HCT116 (cell line): ENCODE measurements at regions of chr22 and their contacts with region 1.

Region 1: GRCh38 chr22:41091132-41092022 is 1.0 kb upstream of the EP300 start:
- DNase-seq: peak; percentile 95
- ATAC-seq: peak; percentile 92
- H3K4me3 ChIP-seq: peak overlapping the region; percentile 71 to 72
- H3K27ac ChIP-seq: peak overlapping the region; percentile 100
- H3K4me1 ChIP-seq: peaks cover 13 to 26% of the 10 kb centered on the region in 2 experiments; a peak in 3 of 4 replicates
- H3K27me3 ChIP-seq: no peaks in the 10 kb centered on the region
- CTCF ChIP-seq: no peak
- POLR2A ChIP-seq: no peak
- RAD21 ChIP-seq: peak; percentile 34; the same call in 1 of the 2 replicates

Region 2: DNA sequence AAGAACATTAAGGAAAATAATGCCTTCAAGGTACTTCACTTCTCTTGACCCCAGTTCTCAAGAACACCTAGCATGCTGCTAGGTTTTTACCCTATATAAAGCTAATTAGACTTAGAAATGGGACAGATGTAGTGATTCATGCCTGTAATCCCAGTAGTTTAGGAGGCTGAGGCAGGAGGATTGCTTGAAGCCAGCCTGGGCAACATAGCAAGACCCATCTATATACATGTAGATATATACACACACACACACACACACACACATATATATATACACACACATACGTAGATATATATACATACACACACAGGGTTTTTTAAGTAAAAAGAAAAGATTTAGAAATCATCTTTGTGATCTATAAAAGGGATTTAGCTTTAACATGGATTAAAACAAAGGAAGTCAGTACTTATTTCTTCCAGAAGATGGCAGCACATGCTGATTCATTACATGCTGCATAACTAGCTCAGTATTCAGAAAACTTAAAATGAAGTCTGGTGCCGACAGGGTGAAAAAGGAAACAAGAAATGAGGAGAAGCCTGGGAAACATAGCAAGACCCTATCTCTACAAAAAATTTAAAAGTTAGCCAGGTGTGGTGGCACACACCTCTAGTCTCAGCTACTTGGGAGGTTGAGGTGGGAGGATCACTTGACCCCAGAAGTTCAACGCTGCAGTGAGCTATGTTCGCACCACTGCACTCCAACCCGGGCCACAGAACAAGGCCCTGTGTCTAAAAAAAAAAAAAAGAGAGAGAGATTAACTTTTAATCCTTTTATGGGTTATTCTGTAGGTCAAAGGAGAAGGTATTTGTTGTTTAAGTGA is 168.7 kb before region 1 on chr22:
- CTCF ChIA-PET with region 1: interaction called, 10 read pairs
- POLR2A ChIA-PET with region 1: no interaction called
- RAD21 ChIA-PET with region 1: interaction called, 3 to 5 read pairs
- intact Hi-C with region 1: loop called (anchors 10 kb)
- DNase-seq: peak; percentile 29
- ATAC-seq: peak; percentile 66
- H3K4me3 ChIP-seq: no peak overlapping the region
- H3K27ac ChIP-seq: no peak overlapping the region
- H3K4me1 ChIP-seq: no peaks in the 10 kb centered on the region
- H3K27me3 ChIP-seq: no peaks in the 10 kb centered on the region
- CTCF ChIP-seq: peak; percentile 48 to 77 (median 49); a peak in 5 of 6 replicates
- POLR2A ChIP-seq: no peak
- RAD21 ChIP-seq: peak; percentile 80

Region 3: DNA sequence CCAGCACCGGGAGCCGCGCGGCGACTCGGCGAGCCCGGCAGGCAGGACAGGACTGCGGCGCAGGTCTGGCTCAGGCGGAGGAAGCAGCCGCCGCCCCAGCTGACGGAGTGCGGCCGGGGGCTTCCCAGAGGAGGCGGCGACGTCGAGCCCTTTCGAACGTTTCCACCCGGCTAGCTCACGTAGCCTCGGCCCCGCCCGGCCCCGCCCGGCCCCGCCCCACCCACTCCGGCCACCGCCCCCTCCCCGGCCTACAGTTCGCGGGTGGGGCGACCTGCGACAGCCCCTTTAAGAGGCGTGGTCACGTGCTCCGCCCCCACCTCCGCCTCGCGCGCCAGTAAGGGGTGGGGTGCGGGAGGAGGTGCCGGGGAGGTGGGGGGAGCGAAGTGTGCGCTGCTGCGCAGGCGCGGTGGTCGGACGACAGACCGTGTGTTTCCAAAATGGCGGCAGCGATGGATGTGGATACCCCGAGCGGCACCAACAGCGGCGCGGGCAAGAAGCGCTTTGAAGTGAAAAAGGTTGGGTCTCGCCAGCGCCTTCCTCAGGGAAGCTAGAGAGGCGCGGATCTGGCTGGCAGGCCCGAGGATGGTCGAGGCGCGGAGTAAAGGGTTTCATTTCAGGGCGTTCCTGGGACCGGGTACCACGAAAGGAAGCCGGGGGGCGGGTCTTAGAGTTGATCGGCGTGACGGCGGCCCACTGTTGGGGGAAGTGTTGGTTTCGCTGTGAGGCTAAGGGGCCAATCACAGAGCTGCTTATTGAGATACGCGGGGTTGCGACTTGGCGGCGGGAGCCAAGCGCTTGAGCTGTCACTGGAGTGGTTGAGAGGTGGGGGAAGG is 140.2 kb before region 1 on chr22 and contains the start of gene RBX1:
- CTCF ChIA-PET with region 1: no interaction called
- POLR2A ChIA-PET with region 1: interaction called, 7 read pairs
- RAD21 ChIA-PET with region 1: interaction called in 1 of 2 experiments, 4 read pairs
- intact Hi-C with region 1: loop called (anchors 1 kb)
- DNase-seq: peak; percentile 96
- ATAC-seq: peak; percentile 85
- H3K4me3 ChIP-seq: peak within 1 kb of the TSS; percentile 87 to 97
- H3K27ac ChIP-seq: peak within 1 kb of the TSS; percentile 83
- H3K4me1 ChIP-seq: peaks cover 4 to 16% of the 10 kb centered on the region in 2 experiments; a peak in 2 of 4 replicates
- H3K27me3 ChIP-seq: no peaks in the 10 kb centered on the region
- CTCF ChIP-seq: no peak
- POLR2A ChIP-seq: peak; percentile 86
- RAD21 ChIP-seq: no peak
- total RNA-seq, gene RBX1: 51.2 TPM

Region 4: DNA sequence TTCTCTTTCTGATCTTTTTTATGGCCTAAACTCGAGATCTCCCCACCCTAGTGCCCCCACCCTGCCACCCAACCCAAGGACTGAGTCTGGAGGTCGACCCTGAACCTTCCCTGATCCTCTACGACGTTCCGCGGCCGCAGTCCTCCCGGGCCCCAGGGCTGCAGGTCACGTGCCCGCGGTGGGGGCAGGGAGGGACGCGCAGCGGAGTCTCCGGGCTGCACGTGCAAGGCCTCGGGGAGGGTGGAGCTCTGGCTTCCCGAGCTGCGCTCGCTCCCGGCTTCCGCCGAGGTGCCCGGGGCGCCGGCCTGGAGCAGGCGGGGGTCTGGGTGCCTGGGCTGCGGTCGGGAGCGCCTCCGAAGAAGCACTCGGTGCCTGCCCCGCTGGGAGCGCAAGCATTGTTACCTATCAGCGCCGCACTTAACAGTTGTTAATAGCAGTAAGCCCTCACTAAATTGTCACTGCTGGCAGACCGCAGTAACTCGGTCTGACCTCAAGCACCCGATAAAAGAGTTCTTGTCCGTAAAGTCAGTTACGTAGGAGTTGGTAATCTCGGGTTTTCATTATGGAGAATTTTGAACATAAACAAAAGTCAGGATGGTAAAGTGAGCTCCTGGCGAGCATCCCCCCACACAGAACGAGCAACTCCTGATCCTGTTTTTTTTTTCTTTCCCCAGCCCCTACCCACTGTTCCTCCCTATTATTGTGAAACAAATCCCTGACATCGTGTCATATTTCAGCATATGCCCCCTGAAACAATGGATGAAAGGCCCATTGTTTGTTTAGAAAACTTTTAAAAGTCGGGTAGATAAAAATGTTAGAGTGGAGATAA is 68.7 kb before region 1 on chr22:
- CTCF ChIA-PET with region 1: no interaction called
- POLR2A ChIA-PET with region 1: interaction called, 4 read pairs
- RAD21 ChIA-PET with region 1: no interaction called
- intact Hi-C with region 1: loop called (anchors 1 kb)
- DNase-seq: peak; percentile 69
- ATAC-seq: peak; percentile 78
- H3K4me3 ChIP-seq: peak overlapping the region; percentile 62 to 77
- H3K27ac ChIP-seq: peak overlapping the region; percentile 100
- H3K4me1 ChIP-seq: peaks cover 23 to 27% of the 10 kb centered on the region in 2 experiments
- H3K27me3 ChIP-seq: no peaks in the 10 kb centered on the region
- CTCF ChIP-seq: no peak
- POLR2A ChIP-seq: peak; percentile 52
- RAD21 ChIP-seq: 0 out of 2 replicates have a peak, but pooled peaks have one; percentile 20

Region 5: GRCh38 chr22:41078931-41079330 is 12.4 kb before region 1 on chr22:
- CTCF ChIA-PET with region 1: no interaction called
- POLR2A ChIA-PET with region 1: no interaction called
- RAD21 ChIA-PET with region 1: no interaction called
- intact Hi-C with region 1: no loop called
- DNase-seq: no peak
- ATAC-seq: no peak
- H3K4me3 ChIP-seq: no peak overlapping the region
- H3K27ac ChIP-seq: no peak overlapping the region
- H3K4me1 ChIP-seq: no peaks in the 10 kb centered on the region
- H3K27me3 ChIP-seq: no peaks in the 10 kb centered on the region
- CTCF ChIP-seq: no peak
- POLR2A ChIP-seq: no peak
- RAD21 ChIP-seq: no peak

Region 6: DNA sequence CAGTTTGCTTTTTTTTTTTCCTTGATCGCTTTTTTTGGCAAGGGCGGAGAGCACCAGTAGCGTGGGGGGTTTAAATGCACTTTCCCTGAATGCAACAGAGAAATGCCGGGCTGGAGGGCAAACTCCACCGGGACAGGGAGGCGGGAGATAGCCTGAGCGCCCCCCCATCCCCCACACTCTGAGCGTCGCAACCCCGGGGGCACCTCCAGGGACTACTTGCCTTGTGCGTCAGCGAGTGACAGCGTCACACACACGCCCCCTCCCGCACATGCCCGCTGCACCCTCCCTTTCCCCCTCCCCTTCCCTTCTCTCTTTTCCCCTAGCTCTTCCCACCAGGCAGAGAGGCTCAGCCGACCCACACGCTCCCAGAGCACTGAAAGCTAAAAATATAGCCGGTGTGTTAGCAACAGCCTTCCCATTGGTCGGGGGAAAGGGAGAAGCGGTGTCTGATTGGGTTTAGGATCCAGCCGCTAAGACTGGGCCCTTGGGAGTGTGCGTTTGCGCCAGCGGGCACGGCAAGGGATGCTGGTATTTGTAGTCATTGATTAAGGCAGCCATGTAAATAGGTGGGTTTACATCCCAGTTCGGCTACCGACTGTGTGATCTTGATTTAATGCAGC is 356.9 kb after region 1 on chr22:
- CTCF ChIA-PET with region 1: no interaction called
- POLR2A ChIA-PET with region 1: no interaction called
- RAD21 ChIA-PET with region 1: no interaction called
- intact Hi-C with region 1: loop called (anchors 10 kb)
- DNase-seq: peak; percentile 99
- ATAC-seq: peak; percentile 80
- H3K4me3 ChIP-seq: peak overlapping the region; percentile 93 to 94
- H3K27ac ChIP-seq: peak overlapping the region; percentile 100
- H3K4me1 ChIP-seq: peaks cover 5 to 29% of the 10 kb centered on the region in 2 experiments; a peak in 3 of 4 replicates
- H3K27me3 ChIP-seq: no peaks in the 10 kb centered on the region
- CTCF ChIP-seq: no peak
- POLR2A ChIP-seq: peak; percentile 37
- RAD21 ChIP-seq: no peak